ENCODE measurements at regions of chr10 and their contacts with region 1.

Region 1: DNA sequence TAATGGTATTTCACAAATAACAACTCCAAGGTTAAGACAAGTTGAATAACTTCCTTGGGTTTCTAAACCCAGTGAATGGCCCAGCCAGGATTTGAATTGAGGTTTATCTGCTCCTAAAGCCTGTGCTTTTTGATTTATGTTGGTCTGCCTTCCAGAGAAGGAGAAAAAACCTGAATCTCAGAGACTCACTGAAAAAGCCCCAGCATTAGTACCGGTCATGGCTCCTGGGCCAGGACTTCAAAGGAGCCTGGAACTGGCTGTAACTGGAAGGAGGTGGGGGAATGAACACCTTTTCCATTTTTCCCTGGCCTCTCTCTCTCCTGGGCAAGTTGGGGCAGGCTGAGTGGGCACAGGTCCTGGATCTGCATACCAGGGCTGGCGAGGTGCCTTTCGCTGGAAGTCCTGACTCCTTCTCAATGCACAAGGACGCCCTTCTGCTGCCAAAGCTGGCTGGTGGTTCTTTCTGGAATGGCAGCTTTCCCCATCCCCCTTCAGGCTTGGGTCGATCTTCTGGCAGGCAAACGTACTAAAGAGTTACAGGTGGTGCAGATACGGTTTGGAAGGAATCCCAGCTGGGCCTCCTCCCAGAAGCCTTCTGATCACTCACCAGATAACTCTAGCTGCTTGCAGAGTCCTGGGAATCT is 268.2 kb downstream of the PTEN start:
- DNase-seq: peak; percentile 42 to 83
- ATAC-seq: peak; percentile 81 to 95 (median 88)
- H3K4me3 ChIP-seq: peak overlapping the region; percentile 57
- H3K27ac ChIP-seq: peak overlapping the region; percentile 80
- H3K4me1 ChIP-seq: peaks cover 23% of the 10 kb centered on the region
- H3K27me3 ChIP-seq: no peaks in the 10 kb centered on the region
- CTCF ChIP-seq: peak; percentile 33

Region 2: DNA sequence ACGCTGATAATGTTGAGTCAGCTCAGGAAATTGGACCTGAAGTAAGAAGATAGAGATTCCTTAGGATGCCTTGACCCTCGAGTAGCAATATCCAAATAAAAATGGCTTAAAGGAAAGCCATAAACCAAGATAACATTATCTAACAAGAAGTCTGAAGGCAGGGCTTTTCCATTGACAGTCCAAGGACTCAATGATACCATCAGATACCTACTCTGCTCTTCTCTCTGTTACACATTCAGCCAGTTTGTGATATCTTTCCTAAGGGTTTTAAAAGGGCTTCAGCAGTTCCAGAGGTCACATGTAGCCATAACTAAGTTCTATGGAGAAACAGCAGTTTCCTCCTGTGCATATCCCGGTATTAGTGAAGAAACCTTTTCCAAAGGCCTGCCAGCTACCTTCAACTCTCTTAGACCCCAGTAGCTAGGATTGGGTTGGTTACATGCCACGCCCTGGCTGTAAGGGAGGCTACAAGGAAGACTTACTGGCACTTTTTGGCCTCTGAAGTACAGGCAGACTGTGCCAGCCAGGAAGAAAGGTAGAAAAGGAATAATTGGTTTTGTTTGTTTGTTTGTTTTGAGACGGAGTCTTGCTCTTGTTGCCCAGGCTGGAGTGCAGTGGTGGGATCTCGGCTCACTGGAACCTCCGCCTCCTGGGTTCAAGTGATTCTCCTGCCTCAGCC is 1026.0 kb before region 1 on chr10:
- intact Hi-C with region 1: no loop called
- DNase-seq: no peak
- ATAC-seq: no peak
- H3K4me3 ChIP-seq: no peak overlapping the region
- H3K27ac ChIP-seq: no peak overlapping the region
- H3K4me1 ChIP-seq: no peaks in the 10 kb centered on the region
- H3K27me3 ChIP-seq: no peaks in the 10 kb centered on the region
- CTCF ChIP-seq: no peak

Region 3: DNA sequence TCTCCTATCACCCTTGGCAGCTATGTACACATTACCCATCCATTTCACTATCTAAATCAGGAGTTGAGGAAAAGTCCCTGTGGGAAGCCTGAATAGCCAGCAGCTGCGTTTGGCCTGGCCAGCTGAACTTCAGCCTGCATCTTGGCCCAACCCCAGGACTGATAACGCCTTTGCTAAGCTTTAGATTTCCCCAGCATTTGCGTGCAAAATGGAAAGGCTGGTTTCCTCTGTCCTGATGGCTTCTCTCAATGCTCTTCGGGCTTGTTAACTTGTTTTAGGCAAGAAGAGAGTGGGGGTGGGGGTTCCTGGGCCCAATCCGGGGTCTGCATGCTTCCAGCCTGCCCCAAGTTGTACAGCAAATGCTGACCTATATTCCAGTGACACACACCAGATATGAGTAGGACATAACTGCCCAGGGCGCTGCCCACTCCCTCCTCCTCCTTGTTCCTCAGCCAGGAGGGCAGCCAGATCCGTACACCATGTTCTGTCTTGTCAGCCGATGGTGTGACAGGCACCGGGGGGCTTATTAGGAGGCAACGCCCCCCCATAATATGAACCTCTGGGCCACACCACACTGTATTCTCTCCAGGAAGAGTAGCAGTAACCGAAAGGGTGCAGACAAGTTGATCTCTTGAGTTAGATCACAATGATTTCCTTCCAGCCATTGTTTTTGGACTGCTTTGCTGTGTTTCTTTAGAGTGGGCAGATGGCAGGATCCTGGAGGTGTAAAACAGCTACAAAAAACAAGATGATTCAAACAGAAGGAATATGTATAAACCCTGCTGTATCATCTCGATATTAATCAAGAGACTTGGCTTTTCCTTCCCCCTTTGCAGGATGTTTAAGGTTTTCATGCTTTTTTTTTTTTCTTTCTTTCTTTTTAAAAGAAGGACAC is 112.5 kb after region 1 on chr10:
- intact Hi-C with region 1: loop called in 1 of 2 experiments (anchors 5 kb)
- DNase-seq: peak; percentile 57 to 90
- ATAC-seq: peak; percentile 92 to 93 (median 92)
- H3K4me3 ChIP-seq: peak overlapping the region; percentile 52
- H3K27ac ChIP-seq: peak overlapping the region; percentile 82
- H3K4me1 ChIP-seq: peaks cover 54% of the 10 kb centered on the region
- H3K27me3 ChIP-seq: no peaks in the 10 kb centered on the region
- CTCF ChIP-seq: no peak